CD4-positive, alpha-beta T cell (primary cell): ENCODE measurements at regions of chr9 and their contacts with region 1.

Region 1: DNA sequence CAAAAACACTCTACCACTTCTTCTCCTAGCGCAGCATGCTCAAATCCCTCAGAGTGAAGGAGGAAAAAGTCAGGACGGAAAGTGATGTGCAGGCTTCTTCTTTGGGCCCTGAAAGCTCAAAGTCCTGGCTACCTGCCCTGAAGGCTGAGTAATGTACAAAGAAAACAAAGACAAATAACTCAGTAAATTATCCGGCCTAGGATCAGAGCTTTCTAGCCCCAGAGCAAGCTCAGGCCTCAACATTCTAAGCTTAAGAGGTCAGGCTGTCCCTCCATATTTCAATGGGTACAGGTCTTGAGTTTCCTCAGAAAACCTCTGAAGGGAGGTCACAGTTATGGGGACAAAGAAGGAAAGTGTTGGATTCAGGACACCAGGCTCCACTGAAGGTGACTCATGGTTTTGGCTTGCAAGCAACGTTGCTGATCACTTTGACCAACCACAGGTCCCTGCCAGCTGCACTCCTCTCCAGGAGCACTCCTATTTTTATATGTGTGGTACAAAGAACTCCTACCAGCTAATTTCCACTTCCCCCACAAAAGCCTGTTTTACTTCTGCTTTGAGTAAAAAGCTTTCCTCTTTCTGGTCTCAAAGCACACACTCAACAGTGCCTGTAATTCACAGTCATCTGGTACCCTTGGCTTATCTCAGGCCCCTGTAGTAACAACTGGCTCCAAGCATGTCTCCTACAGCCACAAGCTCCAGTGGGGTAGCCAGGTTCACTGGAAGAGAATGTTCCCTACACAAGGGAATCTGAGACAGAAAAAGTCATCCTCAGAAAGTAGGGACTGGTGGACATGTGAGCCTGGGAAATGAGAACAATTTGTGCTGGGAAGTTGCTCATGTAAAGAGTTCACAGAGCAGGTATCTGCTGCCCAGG is 115.7 kb downstream of the UGCG start:
- DNase-seq: peak in 2 of 14 experiments; percentile 24 to 26
- ATAC-seq: no peak
- H3K4me3 ChIP-seq: no peak overlapping the region
- H3K4me3 Mint-ChIP-seq: no peak overlapping the region
- H3K27ac ChIP-seq: no peak overlapping the region
- H3K27ac Mint-ChIP-seq: no peak overlapping the region
- H3K4me1 ChIP-seq: peaks cover 9% of the 10 kb centered on the region
- H3K4me1 Mint-ChIP-seq: peaks cover 17% of the 10 kb centered on the region
- H3K27me3 ChIP-seq: no peaks in the 10 kb centered on the region
- H3K27me3 Mint-ChIP-seq: no peaks in the 10 kb centered on the region
- CTCF ChIP-seq: no peak

Region 2: GRCh38 chr9:110370316-110370715 is 1641.9 kb before region 1 on chr9:
- CTCF ChIA-PET with region 1: no interaction called
- POLR2A ChIA-PET with region 1: no interaction called
- intact Hi-C with region 1: no loop called
- DNase-seq: no peak
- ATAC-seq: no peak
- H3K4me3 ChIP-seq: no peak overlapping the region
- H3K4me3 Mint-ChIP-seq: no peak overlapping the region
- H3K27ac ChIP-seq: no peak overlapping the region
- H3K27ac Mint-ChIP-seq: no peak overlapping the region
- H3K4me1 ChIP-seq: no peaks in the 10 kb centered on the region
- H3K4me1 Mint-ChIP-seq: no peaks in the 10 kb centered on the region
- H3K27me3 ChIP-seq: peaks cover 0 to 3% of the 10 kb centered on the region in 2 experiments
- H3K27me3 Mint-ChIP-seq: no peaks in the 10 kb centered on the region
- CTCF ChIP-seq: no peak

Region 3: DNA sequence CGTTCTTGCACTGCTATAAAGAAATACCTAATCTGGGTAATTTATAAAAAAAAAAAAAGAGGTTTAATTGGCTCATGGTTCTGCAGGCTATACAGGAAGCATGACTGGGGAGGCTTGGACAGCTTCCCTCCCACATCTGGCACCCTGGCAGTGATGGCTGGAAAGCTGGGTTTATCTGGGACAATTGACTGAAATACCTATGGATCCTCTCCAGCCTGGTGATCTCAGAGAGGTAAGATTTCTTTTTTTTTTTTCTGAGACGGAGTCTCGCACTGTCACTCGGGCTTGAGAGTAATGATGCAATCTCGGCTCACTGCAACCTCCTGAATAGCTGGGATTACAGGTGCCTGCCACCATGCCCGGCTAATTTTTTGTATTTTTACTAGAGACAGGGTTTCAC is 138.4 kb before region 1 on chr9:
- CTCF ChIA-PET with region 1: no interaction called
- POLR2A ChIA-PET with region 1: no interaction called
- intact Hi-C with region 1: no loop called
- DNase-seq: no peak
- ATAC-seq: no peak
- H3K4me3 ChIP-seq: no peak overlapping the region
- H3K4me3 Mint-ChIP-seq: no peak overlapping the region
- H3K27ac ChIP-seq: no peak overlapping the region
- H3K27ac Mint-ChIP-seq: no peak overlapping the region
- H3K4me1 ChIP-seq: peaks cover 4% of the 10 kb centered on the region
- H3K4me1 Mint-ChIP-seq: no peaks in the 10 kb centered on the region
- H3K27me3 ChIP-seq: no peaks in the 10 kb centered on the region
- H3K27me3 Mint-ChIP-seq: no peaks in the 10 kb centered on the region
- CTCF ChIP-seq: no peak

Region 4: DNA sequence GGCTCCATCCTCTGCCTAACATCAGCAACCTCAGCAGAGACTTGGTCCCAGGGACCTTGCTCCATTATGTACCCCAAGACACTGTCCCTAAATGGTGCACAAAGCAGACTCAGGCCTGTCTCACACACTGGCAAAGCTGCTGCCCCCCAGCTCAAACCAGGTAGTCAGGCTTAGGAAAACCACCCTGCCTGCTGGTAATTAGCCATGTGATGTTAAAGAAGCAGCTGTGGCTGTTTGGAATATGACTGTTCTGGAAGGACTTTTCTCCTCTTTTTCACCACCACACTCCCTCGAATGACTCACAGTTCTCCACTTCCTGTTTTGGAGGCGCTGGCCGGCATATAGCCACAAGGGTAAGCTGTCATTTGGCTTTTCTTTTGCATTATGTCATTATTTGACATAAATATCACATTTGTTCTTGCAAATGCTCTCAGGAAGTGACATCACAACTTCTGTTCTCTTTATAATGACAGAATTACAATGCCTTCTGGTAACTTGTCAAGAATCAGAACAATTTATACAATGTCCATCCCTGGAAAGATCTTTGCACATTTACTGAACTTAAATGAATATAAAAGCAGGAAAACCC is 49.0 kb after region 1 on chr9:
- CTCF ChIA-PET with region 1: no interaction called
- POLR2A ChIA-PET with region 1: no interaction called
- intact Hi-C with region 1: loop called in 1 of 2 experiments (anchors 5 kb)
- DNase-seq: peak in 8 of 14 experiments; percentile 7 to 71 (median 24)
- ATAC-seq: peak; percentile 65
- H3K4me3 ChIP-seq: no peak overlapping the region
- H3K4me3 Mint-ChIP-seq: no peak overlapping the region
- H3K27ac ChIP-seq: no peak overlapping the region
- H3K27ac Mint-ChIP-seq: peak overlapping the region; percentile 13
- H3K4me1 ChIP-seq: peaks cover 9% of the 10 kb centered on the region
- H3K4me1 Mint-ChIP-seq: peaks cover 33% of the 10 kb centered on the region
- H3K27me3 ChIP-seq: no peaks in the 10 kb centered on the region
- H3K27me3 Mint-ChIP-seq: no peaks in the 10 kb centered on the region
- CTCF ChIP-seq: no peak

Region 5: DNA sequence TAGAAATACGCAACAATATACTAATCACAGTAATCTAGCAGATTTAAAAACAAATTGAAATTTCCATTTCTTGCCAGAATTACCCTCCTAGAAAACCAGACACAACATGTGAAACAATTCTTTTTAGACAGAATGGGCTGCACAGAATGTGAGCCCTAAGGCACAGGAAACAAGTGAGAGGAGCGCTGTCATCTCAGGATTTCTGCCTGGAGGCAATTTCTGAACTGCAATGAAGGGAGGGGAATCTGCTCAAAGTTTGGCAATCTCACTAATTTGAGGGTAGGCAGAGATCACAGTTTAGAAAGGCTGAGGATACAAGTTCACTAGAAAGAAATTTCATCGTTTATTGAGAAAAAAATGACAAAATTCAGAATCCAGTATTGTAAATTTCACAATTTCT is 635.3 kb after region 1 on chr9:
- CTCF ChIA-PET with region 1: no interaction called
- POLR2A ChIA-PET with region 1: no interaction called
- intact Hi-C with region 1: no loop called
- DNase-seq: no peak
- ATAC-seq: no peak
- H3K4me3 ChIP-seq: no peak overlapping the region
- H3K4me3 Mint-ChIP-seq: no peak overlapping the region
- H3K27ac ChIP-seq: no peak overlapping the region
- H3K27ac Mint-ChIP-seq: no peak overlapping the region
- H3K4me1 ChIP-seq: no peaks in the 10 kb centered on the region
- H3K4me1 Mint-ChIP-seq: no peaks in the 10 kb centered on the region
- H3K27me3 ChIP-seq: no peaks in the 10 kb centered on the region
- H3K27me3 Mint-ChIP-seq: no peaks in the 10 kb centered on the region
- CTCF ChIP-seq: no peak